WTC11 (cell line): ENCODE measurements at regions of chr15 and their contacts with region 1.

Region 1: DNA sequence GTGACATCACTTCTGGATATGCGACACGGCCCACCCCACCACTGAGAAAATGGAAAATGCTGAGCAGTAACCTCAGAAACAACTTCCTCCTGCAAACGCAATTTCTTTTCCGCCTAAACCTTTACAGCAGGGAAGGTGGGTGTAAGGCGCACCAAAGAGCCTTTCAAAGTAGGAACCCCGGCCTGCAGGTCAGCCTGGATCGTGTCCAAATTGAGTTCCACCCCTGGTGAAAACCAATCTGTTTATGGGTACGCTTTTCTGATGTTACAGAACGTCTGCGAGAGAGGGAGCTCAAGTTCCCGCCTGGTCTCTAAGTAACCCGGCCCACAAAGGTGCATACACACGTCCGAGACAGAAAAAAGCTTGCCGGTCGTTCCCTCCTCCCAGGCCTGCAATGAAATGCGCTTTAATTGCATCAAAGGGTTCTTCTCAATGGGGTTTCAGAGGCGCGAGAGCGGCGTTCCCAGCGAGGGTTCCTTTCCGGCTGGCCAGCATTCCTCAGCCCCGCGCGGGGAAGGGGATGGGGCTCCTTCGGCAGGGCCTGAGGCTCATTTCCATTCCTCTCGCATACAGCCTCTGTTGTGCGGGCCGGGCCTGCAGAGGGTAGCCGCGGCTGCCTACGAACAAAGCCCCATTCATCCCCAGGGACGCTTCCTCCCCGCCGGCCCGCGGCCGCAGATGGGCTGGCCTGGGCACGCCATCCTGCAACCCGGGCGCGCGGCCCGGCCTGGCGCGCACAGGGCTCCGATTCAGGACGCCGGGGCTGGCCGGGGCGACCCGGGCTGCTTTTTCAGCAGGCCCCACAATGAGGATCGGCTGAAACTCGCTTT is 138.1 kb downstream of the TMCO5A start:
- DNase-seq: peak; percentile 91
- ATAC-seq: peak; percentile 93
- H3K4me3 Mint-ChIP-seq: peak overlapping the region; percentile 82
- H3K27ac Mint-ChIP-seq: peak overlapping the region; percentile 96
- H3K4me1 Mint-ChIP-seq: peaks cover 67% of the 10 kb centered on the region
- H3K27me3 Mint-ChIP-seq: peaks cover 75% of the 10 kb centered on the region
- CTCF ChIP-seq: no peak

Region 2: DNA sequence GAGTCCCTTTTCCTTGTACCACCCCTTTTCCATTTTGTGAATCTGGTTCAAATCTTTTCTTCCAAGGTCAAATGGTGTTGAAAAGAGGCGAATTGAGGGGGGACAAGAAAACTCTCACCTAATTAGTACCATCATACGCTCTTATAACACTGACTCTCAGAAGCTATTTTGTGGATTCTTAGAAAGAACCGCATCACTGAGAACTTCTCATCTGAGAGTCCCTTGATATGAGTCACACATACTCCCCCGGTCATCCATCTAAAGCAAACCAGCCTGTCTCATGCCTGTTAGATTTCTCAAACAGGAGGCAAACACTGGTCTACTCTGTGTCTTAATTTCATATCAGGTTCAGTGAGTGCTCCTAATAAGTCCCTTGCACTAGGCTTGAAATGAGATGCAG is 103.6 kb after region 1 on chr15:
- CTCF ChIA-PET with region 1: no interaction called
- POLR2A ChIA-PET with region 1: no interaction called
- DNase-seq: no peak
- ATAC-seq: no peak
- H3K4me3 Mint-ChIP-seq: no peak overlapping the region
- H3K27ac Mint-ChIP-seq: no peak overlapping the region
- H3K4me1 Mint-ChIP-seq: peaks cover 11% of the 10 kb centered on the region
- H3K27me3 Mint-ChIP-seq: no peaks in the 10 kb centered on the region
- CTCF ChIP-seq: no peak

Region 3: DNA sequence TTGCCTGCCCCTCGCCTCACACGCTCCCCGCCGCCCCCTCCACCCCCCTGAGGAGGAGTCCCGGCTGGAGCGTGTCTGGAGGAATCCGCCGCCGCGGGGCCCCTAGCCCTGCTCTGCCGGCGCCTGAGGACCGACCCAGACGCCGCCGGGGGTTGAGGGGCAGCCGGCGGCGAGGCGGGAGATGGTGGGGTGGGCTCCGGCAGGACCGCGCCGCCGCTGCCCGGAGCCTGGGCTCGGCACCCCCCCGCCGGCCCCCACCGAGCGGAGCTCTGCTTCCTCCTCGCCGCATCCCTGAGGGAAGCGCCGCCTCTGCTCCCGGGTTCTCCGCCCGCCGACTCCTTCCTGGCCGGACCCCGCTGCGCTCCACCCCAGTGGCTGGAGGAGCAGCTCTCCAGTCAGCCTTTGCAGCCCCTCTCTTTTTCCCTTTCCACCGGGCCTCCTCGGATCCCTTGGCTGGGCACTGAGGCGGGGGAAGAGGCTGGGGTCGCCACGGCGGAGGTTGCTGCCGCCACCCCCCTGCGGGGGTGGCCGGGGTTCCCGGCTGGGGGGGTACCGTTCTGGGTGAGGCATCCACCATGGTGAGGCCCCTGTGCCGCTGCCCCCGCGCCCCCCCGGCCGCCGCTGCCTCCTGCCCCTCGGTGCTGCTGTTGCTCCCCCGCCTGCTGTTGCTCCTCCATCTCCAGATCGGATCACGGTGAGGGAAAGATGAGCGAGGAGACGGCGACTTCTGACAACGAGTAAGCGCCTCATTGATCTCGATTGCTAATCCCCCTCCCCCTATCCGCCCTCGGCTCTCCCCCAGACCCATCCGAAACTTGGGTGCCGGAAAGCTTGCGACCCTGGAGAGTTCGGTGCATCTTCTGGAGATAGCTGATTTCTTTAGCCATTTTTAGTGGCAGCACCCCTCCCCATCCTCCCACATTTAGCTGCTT is 180.2 kb after region 1 on chr15 and contains the start of gene SPRED1:
- CTCF ChIA-PET with region 1: interaction called, 10 read pairs
- POLR2A ChIA-PET with region 1: interaction called, 10 read pairs
- DNase-seq: peak; percentile 61
- ATAC-seq: peak; percentile 7
- H3K4me3 Mint-ChIP-seq: peak within 1 kb of the TSS; percentile 95
- H3K27ac Mint-ChIP-seq: peak within 1 kb of the TSS; percentile 99
- H3K4me1 Mint-ChIP-seq: peaks cover 49% of the 10 kb centered on the region
- H3K27me3 Mint-ChIP-seq: no peaks in the 10 kb centered on the region
- CTCF ChIP-seq: no peak
- total RNA-seq, gene SPRED1: 35.9 to 37.1 TPM (median 36.1 TPM) in 3 replicates